Naive thymus-derived CD4-positive, alpha-beta T cell (primary cell): ENCODE measurements at regions of chr19 and their contacts with region 1.

Region 1: DNA sequence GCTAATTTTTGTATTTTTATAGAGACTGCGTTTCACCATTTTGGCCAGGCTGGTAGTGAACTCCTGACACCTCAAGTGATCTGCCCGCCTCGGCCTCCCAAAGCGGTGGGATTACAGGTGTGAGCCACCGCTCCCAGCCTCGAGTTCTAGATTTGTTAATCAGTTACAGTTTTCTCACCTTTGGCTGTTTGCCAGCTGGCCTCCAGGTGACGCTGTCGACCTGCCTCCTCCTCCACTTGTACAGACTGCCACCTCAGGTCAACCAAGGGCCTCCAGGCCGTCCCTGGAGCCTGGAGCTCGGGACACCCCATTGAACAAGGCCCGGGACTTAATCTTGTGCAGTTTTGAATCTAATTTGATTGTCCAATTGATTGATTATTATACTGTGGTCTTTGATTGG is 45.5 kb downstream of the IER2 start:
- DNase-seq: peak in 5 of 9 donors; percentile 26 to 42 (median 28)
- ATAC-seq: no peak
- H3K4me3 ChIP-seq: no peak overlapping the region
- H3K4me3 Mint-ChIP-seq: peak overlapping the region in 3 of 10 donors; percentile 7 to 24 (median 17)
- H3K27ac ChIP-seq: no peak overlapping the region
- H3K27ac Mint-ChIP-seq: peak overlapping the region in 6 of 9 donors; percentile 39 to 79 (median 72)
- H3K4me1 ChIP-seq: peaks cover 6 to 33% of the 10 kb centered on the region in 2 donors
- H3K4me1 Mint-ChIP-seq: peaks cover 5 to 31% (median 26%) of the 10 kb centered on the region in 7 donors
- H3K27me3 ChIP-seq: no peaks in the 10 kb centered on the region
- H3K27me3 Mint-ChIP-seq: no peaks in the 10 kb centered on the region

Region 2: DNA sequence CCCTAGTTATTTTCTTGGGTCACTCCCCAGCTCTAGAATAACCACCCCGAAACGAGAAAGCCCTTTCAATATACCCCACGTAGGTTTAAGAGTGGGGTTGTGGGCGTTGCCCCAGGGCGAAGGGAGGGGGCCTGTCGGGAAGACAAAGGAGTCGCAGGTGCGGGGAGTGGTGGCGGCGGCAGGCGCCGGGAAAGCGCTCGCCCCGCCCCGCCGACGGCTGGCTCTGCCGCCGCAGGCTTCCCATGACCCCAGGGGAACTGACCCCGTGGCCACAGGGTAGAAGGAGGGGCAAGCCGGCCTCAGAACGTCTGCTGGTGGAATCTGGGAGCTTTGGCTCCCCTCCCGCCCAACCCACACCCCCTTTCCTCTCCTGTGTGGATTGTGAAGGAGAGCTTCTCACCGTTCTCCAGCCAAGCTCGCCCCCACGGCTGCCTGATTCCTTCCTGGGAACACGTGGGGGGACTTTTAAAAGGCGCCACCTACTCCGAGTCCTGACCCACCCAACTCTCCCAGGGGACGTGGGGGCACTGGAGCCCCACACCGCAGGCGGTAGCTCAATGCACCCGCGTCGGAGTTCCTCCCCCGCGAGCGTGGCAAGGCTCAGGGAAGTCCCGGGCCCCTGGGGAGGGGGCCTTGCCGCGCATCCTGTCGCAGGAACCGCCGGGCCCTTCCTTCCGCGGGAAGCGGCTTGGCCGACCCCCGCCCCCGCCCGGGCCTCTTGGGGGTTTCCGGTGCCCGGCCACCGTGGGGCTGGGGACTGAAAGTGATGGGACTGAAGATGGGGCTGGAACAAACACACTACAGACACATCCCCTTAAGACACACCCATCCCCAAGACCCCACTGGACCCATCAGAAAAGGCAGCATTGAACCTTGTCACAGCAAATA is 40.0 kb before region 1 on chr19:
- CTCF ChIA-PET with region 1: interaction called, 12 read pairs
- POLR2A ChIA-PET with region 1: interaction called, 263 read pairs
- intact Hi-C with region 1: loop called (anchors 1 kb)
- DNase-seq: peak; percentile 65 to 86 (median 75)
- ATAC-seq: peak; percentile 43
- H3K4me3 ChIP-seq: peak overlapping the region; percentile 96
- H3K4me3 Mint-ChIP-seq: peak overlapping the region; percentile 94 to 100 (median 98)
- H3K27ac ChIP-seq: peak overlapping the region; percentile 96
- H3K27ac Mint-ChIP-seq: peak overlapping the region; percentile 97 to 100 (median 99)
- H3K4me1 ChIP-seq: peaks cover 14 to 29% of the 10 kb centered on the region in 2 donors
- H3K4me1 Mint-ChIP-seq: peaks cover 22 to 63% (median 39%) of the 10 kb centered on the region in 7 donors
- H3K27me3 ChIP-seq: no peaks in the 10 kb centered on the region
- H3K27me3 Mint-ChIP-seq: peaks cover 0 to 17% (median 0%) of the 10 kb centered on the region in 5 donors

Region 3: DNA sequence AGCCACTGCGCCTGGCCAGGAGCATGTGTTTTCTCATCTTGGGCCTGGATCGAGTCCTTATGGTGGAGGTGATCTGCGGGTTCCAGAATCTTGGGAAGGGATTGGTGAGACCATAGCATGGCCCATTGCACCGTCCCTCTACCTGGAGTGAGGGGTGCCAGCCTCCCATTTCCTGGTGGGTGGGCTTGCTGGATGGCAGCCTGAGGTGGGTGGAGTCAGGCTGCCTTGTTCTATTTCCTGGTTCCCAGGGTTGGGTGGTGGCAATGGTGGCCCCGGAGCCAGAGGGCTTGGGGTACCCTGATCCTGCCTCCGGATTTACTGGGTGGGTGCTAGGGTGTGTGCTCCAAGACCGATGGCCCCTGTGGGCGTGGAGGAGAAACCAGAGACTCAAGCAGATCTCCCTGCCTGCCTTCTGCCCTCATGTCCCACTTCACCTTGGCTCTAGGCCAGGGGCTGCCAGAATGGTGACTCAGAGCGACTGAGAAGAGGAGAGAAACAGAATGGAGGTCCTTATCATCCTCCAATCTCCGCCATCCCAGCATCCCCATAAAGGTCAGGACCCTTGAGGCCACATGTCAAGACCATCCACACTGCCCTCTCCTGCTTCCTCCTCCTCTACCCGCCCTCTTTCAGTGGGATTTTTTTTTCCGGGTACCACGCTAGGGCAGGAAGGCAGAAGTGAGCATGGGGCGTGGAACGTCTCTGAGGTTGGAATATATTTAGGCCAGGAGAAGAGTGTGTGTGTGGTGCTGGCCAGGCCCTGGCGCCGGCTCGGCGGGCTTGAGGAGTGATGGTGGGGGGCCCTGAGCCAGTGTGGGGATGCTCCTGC is 23.4 kb before region 1 on chr19:
- CTCF ChIA-PET with region 1: interaction called, 32 read pairs
- POLR2A ChIA-PET with region 1: interaction called, 263 read pairs
- intact Hi-C with region 1: loop called (anchors 1 kb)
- DNase-seq: peak; percentile 46 to 80 (median 55)
- ATAC-seq: peak; percentile 14
- H3K4me3 ChIP-seq: peak overlapping the region; percentile 41
- H3K4me3 Mint-ChIP-seq: peak overlapping the region; percentile 79 to 90 (median 84)
- H3K27ac ChIP-seq: peak overlapping the region; percentile 76
- H3K27ac Mint-ChIP-seq: peak overlapping the region; percentile 92 to 100 (median 98)
- H3K4me1 ChIP-seq: peaks cover 57 to 64% of the 10 kb centered on the region in 2 donors
- H3K4me1 Mint-ChIP-seq: peaks cover 40 to 75% (median 59%) of the 10 kb centered on the region in 7 donors
- H3K27me3 ChIP-seq: no peaks in the 10 kb centered on the region
- H3K27me3 Mint-ChIP-seq: no peaks in the 10 kb centered on the region

Region 4: GRCh38 chr19:13234518-13234917 is 38.8 kb after region 1 on chr19:
- CTCF ChIA-PET with region 1: interaction called, 6 read pairs
- POLR2A ChIA-PET with region 1: no interaction called
- intact Hi-C with region 1: loop called in 1 of 2 experiments (anchors 1 kb)
- DNase-seq: peak in 8 of 9 donors; percentile 16 to 74 (median 50)
- ATAC-seq: peak; percentile 91
- H3K4me3 ChIP-seq: peak overlapping the region; percentile 35
- H3K4me3 Mint-ChIP-seq: peak overlapping the region; percentile 5 to 82 (median 59)
- H3K27ac ChIP-seq: no peak overlapping the region
- H3K27ac Mint-ChIP-seq: peak overlapping the region in 6 of 9 donors; percentile 4 to 88 (median 66)
- H3K4me1 ChIP-seq: peaks cover 9 to 15% of the 10 kb centered on the region in 2 donors
- H3K4me1 Mint-ChIP-seq: peaks cover 14 to 22% (median 15%) of the 10 kb centered on the region in 7 donors
- H3K27me3 ChIP-seq: no peaks in the 10 kb centered on the region
- H3K27me3 Mint-ChIP-seq: peaks cover 0 to 6% (median 0%) of the 10 kb centered on the region in 5 donors

Region 5: GRCh38 chr19:13430790-13431582 is 235.3 kb after region 1 on chr19:
- CTCF ChIA-PET with region 1: no interaction called
- POLR2A ChIA-PET with region 1: no interaction called
- intact Hi-C with region 1: loop called in 1 of 2 experiments (anchors 10 kb)
- DNase-seq: peak; percentile 5 to 39 (median 26)
- ATAC-seq: peak; percentile 57
- H3K4me3 ChIP-seq: no peak overlapping the region
- H3K4me3 Mint-ChIP-seq: no peak overlapping the region
- H3K27ac ChIP-seq: no peak overlapping the region
- H3K27ac Mint-ChIP-seq: peak overlapping the region in 1 of 9 donors; percentile 80
- H3K4me1 ChIP-seq: no peaks in the 10 kb centered on the region
- H3K4me1 Mint-ChIP-seq: no peaks in the 10 kb centered on the region
- H3K27me3 ChIP-seq: peaks cover 0 to 4% of the 10 kb centered on the region in 2 donors
- H3K27me3 Mint-ChIP-seq: peaks cover 0 to 31% (median 26%) of the 10 kb centered on the region in 5 donors

Region 6: GRCh38 chr19:13637664-13638063 is 442.0 kb after region 1 on chr19:
- CTCF ChIA-PET with region 1: no interaction called
- POLR2A ChIA-PET with region 1: no interaction called
- intact Hi-C with region 1: no loop called
- DNase-seq: no peak
- ATAC-seq: no peak
- H3K4me3 ChIP-seq: no peak overlapping the region
- H3K4me3 Mint-ChIP-seq: no peak overlapping the region
- H3K27ac ChIP-seq: no peak overlapping the region
- H3K27ac Mint-ChIP-seq: peak overlapping the region in 1 of 9 donors; percentile 83
- H3K4me1 ChIP-seq: no peaks in the 10 kb centered on the region
- H3K4me1 Mint-ChIP-seq: peaks cover 0 to 2% (median 0%) of the 10 kb centered on the region in 7 donors
- H3K27me3 ChIP-seq: peaks cover 0 to 3% of the 10 kb centered on the region in 2 donors
- H3K27me3 Mint-ChIP-seq: peaks cover 2 to 22% (median 16%) of the 10 kb centered on the region in 5 donors